ENCODE measurements at regions of chr15 and their contacts with region 1.

Region 1: GRCh38 chr15:92881802-92882696 is 18.1 kb upstream of the CHD2 start:
- DNase-seq: peak; percentile 99 to 100
- ATAC-seq: peak; percentile 95
- H3K4me3 ChIP-seq: peak overlapping the region; percentile 34
- H3K27ac ChIP-seq: peak overlapping the region; percentile 86 to 99
- H3K4me1 ChIP-seq: peaks cover 36% of the 10 kb centered on the region
- CTCF ChIP-seq: no peak
- EP300 ChIP-seq: no peak
- POLR2A ChIP-seq: peak; percentile 85
- RAD21 ChIP-seq: no peak

Region 2: GRCh38 chr15:92803847-92804609 is 78.0 kb before region 1 on chr15:
- CTCF ChIA-PET with region 1: interaction called, 168 read pairs
- POLR2A ChIA-PET with region 1: interaction called, 359 read pairs
- DNase-seq: peak; percentile 96 to 100
- ATAC-seq: peak; percentile 85 to 87
- H3K4me3 ChIP-seq: no peak overlapping the region
- H3K27ac ChIP-seq: peak overlapping the region; percentile 95 to 97
- H3K4me1 ChIP-seq: peaks cover 48% of the 10 kb centered on the region
- CTCF ChIP-seq: no peak
- EP300 ChIP-seq: peak; percentile 98
- POLR2A ChIP-seq: no peak
- RAD21 ChIP-seq: peak; percentile 45 to 60; a peak in 3 of 5 replicates

Region 3: DNA sequence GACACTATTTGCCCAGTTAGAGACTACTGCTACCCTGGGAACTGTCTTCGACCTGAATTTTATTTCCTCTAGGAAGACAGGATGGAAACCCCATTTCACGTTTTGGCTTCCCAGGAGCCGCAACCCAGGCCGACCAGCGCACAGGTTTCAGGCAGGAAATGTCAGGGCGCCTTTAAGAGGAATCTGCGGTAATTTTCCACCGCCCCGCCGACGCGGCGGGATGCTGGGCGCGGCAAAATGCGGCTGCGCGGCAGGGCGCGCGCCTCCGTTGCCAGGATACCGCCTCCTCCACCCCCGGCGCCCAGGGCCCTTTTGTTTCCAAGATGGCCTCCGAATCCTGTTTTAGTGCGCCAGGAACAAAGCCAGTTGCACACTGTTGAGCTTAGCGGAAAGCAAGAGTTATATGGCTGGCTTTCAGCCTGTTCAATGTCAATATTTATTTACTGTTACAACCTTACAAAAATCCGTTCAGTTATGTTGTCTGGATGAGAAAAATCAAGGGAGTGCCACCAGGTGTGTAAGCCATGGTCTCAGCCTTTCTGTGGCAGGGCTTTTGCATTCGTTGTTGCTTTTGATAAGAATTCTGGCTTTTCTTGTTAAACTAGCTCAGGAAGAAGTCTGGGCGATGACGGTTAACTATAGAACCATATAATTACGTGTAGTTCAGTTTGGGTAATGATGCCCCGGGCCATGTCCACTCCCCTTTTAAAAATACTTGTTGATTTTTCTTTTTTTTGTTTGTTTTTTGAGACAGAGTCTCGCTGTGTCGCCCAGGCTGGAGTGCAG is 61.6 kb before region 1 on chr15:
- CTCF ChIA-PET with region 1: interaction called, 9 read pairs
- POLR2A ChIA-PET with region 1: interaction called, 231 read pairs
- DNase-seq: peak; percentile 96 to 97
- ATAC-seq: peak; percentile 85 to 88
- H3K4me3 ChIP-seq: peak overlapping the region; percentile 46
- H3K27ac ChIP-seq: peak overlapping the region; percentile 90 to 92
- H3K4me1 ChIP-seq: peaks cover 52% of the 10 kb centered on the region
- CTCF ChIP-seq: no peak
- EP300 ChIP-seq: no peak
- POLR2A ChIP-seq: peak; percentile 57
- RAD21 ChIP-seq: peak in 1 of 2 experiments; percentile 3; a peak in 2 of 5 replicates

Region 4: GRCh38 chr15:92845126-92845508 is 36.9 kb before region 1 on chr15:
- CTCF ChIA-PET with region 1: interaction called, 4 read pairs
- POLR2A ChIA-PET with region 1: interaction called, 11 read pairs
- DNase-seq: peak in 1 of 2 experiments; percentile 72
- ATAC-seq: peak; percentile 45 to 57; a peak in 3 of 6 replicates
- H3K4me3 ChIP-seq: no peak overlapping the region
- H3K27ac ChIP-seq: peak overlapping the region; percentile 50 to 75
- H3K4me1 ChIP-seq: peaks cover 23% of the 10 kb centered on the region
- CTCF ChIP-seq: no peak
- EP300 ChIP-seq: no peak
- POLR2A ChIP-seq: no peak
- RAD21 ChIP-seq: no peak

Region 5: GRCh38 chr15:92861742-92862141 is 20.3 kb before region 1 on chr15:
- CTCF ChIA-PET with region 1: interaction called, 49 read pairs
- POLR2A ChIA-PET with region 1: interaction called, 134 read pairs
- DNase-seq: no peak
- ATAC-seq: no peak
- H3K4me3 ChIP-seq: no peak overlapping the region
- H3K27ac ChIP-seq: no peak overlapping the region
- H3K4me1 ChIP-seq: peaks cover 4% of the 10 kb centered on the region; the same call in 2 of the 3 replicates
- CTCF ChIP-seq: no peak
- EP300 ChIP-seq: no peak
- POLR2A ChIP-seq: no peak
- RAD21 ChIP-seq: no peak

Region 6: GRCh38 chr15:92896561-92896960 is 14.5 kb after region 1 on chr15:
- CTCF ChIA-PET with region 1: interaction called, 13 read pairs
- POLR2A ChIA-PET with region 1: interaction called, 374 read pairs
- DNase-seq: no peak
- ATAC-seq: no peak
- H3K4me3 ChIP-seq: no peak overlapping the region
- H3K27ac ChIP-seq: no peak overlapping the region
- H3K4me1 ChIP-seq: peaks cover 39% of the 10 kb centered on the region
- CTCF ChIP-seq: no peak
- EP300 ChIP-seq: no peak
- POLR2A ChIP-seq: no peak
- RAD21 ChIP-seq: no peak

Region 7: GRCh38 chr15:92917606-92918407 is 35.8 kb after region 1 on chr15:
- CTCF ChIA-PET with region 1: interaction called, 9 read pairs
- POLR2A ChIA-PET with region 1: interaction called, 19 read pairs
- DNase-seq: peak; percentile 86 to 97
- ATAC-seq: peak; percentile 55 to 59
- H3K4me3 ChIP-seq: peak overlapping the region; percentile 28
- H3K27ac ChIP-seq: peak overlapping the region; percentile 79 to 88
- H3K4me1 ChIP-seq: peaks cover 95% of the 10 kb centered on the region
- CTCF ChIP-seq: peak; percentile 98
- EP300 ChIP-seq: no peak
- POLR2A ChIP-seq: no peak
- RAD21 ChIP-seq: peak; percentile 94 to 98